ENCODE measurements at regions of chr1 and their contacts with region 1.

Region 1: GRCh38 chr1:58546520-58547308 is at the start of gene OMA1:
- DNase-seq: peak; percentile 86
- H3K4me3 ChIP-seq: peak within 1 kb of the TSS; percentile 77
- CTCF ChIP-seq: peak; percentile 96

Region 2: DNA sequence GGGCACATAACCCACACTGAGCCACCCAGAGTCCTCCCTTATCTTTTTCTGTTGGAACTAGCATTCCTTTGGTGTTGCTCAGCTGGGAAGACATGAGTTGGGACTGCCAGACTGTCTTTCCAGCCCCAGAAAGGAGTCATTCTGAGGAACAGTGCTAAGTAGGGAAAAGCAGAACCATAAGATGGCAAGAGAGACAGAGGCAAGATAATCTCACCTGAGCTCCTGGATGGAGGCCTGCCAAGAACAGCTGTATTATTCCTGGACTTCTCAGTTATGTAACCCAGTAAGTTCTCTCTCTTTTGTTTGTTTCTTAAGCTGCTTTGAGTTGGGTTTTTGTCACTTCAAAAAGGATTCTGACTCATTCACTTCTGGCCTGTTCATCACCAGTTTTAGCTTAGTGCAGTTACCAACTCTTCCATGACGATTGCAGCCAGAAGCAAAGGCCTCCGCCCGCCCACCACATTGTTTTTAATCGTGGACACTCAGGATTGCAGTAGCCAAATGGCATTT is 134.6 kb before region 1 on chr1:
- CTCF ChIA-PET with region 1: no interaction called
- POLR2A ChIA-PET with region 1: no interaction called
- DNase-seq: peak; percentile 21
- H3K4me3 ChIP-seq: no peak overlapping the region
- CTCF ChIP-seq: no peak

Region 3: GRCh38 chr1:58561633-58562032 is 14.9 kb after region 1 on chr1:
- CTCF ChIA-PET with region 1: interaction called, 18 read pairs
- POLR2A ChIA-PET with region 1: no interaction called
- DNase-seq: no peak
- H3K4me3 ChIP-seq: no peak overlapping the region
- CTCF ChIP-seq: no peak

Region 4: DNA sequence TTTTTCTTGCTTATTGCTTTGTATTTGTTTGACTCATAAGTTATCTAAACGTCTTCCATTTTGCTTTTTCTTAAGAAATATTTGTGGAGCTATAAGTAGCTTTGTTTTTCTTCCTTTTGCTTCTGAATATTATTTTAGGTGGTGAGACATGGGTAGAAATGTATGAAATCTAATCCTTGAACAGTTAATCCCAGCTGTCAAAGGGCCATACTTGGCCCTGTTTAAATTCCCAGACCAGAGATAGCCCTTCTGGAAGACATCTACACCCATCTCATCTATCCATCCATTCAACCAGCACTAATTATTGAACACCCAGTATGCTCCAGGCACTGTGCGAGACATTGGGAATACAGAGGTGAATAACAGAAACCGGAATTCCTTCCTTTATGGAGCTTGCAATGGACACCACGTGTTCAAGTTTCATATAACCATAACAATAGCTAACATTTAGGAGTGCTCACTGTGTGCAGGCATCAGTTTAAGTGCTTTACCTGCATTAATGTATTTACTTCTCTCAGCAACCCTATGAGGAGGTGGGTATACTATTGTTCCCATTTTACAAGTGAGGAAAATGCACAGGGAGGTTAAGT is 21.7 kb after region 1 on chr1:
- CTCF ChIA-PET with region 1: interaction called, 14 read pairs
- POLR2A ChIA-PET with region 1: no interaction called
- DNase-seq: no peak
- H3K4me3 ChIP-seq: no peak overlapping the region
- CTCF ChIP-seq: no peak